ENCODE measurements at regions of chr11 and their contacts with region 1.

Region 1: DNA sequence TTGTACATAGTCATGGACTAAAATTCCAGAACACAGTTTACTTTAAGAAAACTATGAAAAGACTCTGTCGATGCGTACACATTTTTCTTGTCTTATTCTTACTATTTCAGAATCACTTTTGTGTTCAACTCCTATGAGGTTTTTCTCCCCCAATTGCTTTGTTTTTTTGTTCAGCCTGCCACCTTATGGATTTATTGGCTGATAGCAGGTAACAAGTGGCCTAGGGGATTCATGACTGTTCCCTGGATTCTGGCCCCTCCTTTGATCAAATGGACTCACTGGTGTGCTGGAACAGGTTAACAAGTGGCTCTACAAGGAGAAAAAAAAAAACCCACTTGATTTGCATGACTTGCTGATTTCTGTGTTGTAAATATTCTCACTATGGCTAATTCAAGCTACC is 10.6 kb downstream of the MMP20 start:
- DNase-seq: no peak
- ATAC-seq: 0 out of 3 replicates have a peak, but pooled peaks have one; percentile 3
- H3K4me3 ChIP-seq: no peak overlapping the region
- H3K27ac ChIP-seq: no peak overlapping the region
- H3K4me1 ChIP-seq: peaks cover 18% of the 10 kb centered on the region
- H3K27me3 ChIP-seq: no peaks in the 10 kb centered on the region
- CTCF ChIP-seq: peak; percentile 18 to 55 (median 40); a peak in 5 of 6 replicates
- EP300 ChIP-seq: no peak
- POLR2A ChIP-seq: no peak
- RAD21 ChIP-seq: peak; percentile 80

Region 2: DNA sequence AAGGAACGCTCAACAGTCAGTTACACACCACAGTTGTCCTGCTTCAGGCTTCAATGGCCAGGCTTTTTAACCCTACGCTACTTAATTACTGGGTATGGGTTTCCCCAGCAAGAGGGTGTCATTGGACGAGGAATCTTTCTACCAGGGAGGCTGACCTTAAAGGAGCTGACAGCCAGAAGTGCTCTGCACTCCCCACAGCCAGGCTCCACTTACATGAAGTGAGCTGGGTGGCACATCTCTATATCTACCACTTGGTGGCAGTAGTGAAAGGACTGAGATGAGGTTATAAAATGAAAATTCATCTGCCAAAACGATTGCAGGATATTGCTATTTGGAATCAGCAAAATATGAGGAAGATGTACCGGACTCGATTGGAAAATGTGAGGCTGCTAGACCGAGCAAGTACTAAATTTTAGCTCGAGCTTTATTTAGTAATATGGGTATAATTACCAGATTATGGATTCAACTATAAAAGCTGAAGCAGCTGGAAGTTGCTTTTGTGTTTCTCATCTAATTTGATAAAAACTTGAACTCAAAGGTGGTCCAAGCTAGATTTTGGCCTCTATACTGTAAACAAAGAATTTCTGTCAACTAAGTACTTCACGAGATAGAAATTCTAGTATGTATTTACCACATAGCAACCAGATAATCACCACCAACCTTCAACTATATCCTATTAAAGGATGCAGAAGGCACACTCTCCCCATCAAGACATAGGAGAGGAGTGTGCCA is 753.6 kb before region 1 on chr11:
- CTCF ChIA-PET with region 1: interaction called, 9 read pairs
- POLR2A ChIA-PET with region 1: no interaction called
- RAD21 ChIA-PET with region 1: interaction called, 4 read pairs
- SMC1A ChIA-PET with region 1: interaction called, 10 read pairs
- in situ Hi-C with region 1: no loop called
- intact Hi-C with region 1: no loop called
- DNase-seq: no peak
- ATAC-seq: peak; percentile 91
- H3K4me3 ChIP-seq: no peak overlapping the region
- H3K27ac ChIP-seq: no peak overlapping the region
- H3K4me1 ChIP-seq: no peaks in the 10 kb centered on the region
- H3K27me3 ChIP-seq: no peaks in the 10 kb centered on the region; a peak in 1 of 4 replicates
- CTCF ChIP-seq: peak; percentile 61 to 72 (median 65)
- EP300 ChIP-seq: no peak
- POLR2A ChIP-seq: no peak
- RAD21 ChIP-seq: peak; percentile 57

Region 3: GRCh38 chr11:102332611-102332994 is 281.9 kb before region 1 on chr11:
- CTCF ChIA-PET with region 1: interaction called, 35 read pairs
- POLR2A ChIA-PET with region 1: no interaction called
- RAD21 ChIA-PET with region 1: interaction called, 4 read pairs
- SMC1A ChIA-PET with region 1: interaction called, 6 read pairs
- in situ Hi-C with region 1: no loop called
- intact Hi-C with region 1: no loop called
- DNase-seq: no peak
- ATAC-seq: peak; percentile 32
- H3K4me3 ChIP-seq: no peak overlapping the region
- H3K27ac ChIP-seq: no peak overlapping the region
- H3K4me1 ChIP-seq: no peaks in the 10 kb centered on the region; the same call in 1 of the 2 replicates
- H3K27me3 ChIP-seq: no peaks in the 10 kb centered on the region
- CTCF ChIP-seq: no peak
- EP300 ChIP-seq: no peak
- POLR2A ChIP-seq: 0 out of 2 replicates have a peak, but pooled peaks have one; percentile 2
- RAD21 ChIP-seq: no peak

Region 4: DNA sequence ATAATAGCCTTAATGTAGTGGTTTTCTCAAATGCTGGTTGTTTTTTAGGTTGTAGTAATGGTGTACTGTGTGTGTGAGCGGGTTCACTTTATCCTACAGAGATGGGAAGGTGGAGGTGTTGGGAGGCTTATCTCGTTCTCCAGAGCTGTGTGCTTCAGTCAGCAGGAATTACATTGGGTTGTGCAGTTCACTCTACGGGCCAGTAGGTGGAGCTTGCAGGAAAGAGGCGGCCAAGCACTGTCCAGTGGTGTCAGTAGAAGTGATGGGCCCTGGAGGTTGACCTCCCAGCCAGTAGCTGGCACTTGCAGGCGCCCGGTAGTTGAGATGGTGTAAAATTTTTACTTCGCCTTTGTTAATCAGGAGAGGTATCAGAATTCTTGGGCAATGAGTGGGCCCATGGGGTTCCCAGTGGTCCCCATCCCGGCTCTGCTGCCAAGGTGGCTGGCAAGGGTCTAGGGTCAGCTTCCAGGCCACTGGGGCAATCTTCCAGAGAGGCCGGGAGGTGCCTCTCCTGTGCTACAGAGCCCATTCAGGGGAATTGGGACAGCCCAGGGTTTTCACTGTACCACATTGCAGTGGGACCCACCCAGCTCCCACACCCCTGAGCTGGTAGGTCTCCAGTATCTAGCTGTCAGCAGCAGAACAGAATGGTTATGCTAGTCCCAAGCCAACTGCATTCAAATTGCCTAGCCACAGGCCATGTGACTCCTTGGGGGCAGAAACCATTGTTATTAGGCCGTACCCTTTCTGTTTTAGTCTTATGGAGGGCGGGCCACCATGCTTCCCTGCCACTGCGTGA is 223.6 kb before region 1 on chr11:
- CTCF ChIA-PET with region 1: interaction called, 172 read pairs
- POLR2A ChIA-PET with region 1: interaction called, 4 read pairs
- RAD21 ChIA-PET with region 1: interaction called, 112 read pairs
- SMC1A ChIA-PET with region 1: interaction called, 168 read pairs
- in situ Hi-C with region 1: no loop called
- intact Hi-C with region 1: loop called (anchors 1 kb)
- DNase-seq: no peak
- ATAC-seq: peak; percentile 93
- H3K4me3 ChIP-seq: no peak overlapping the region
- H3K27ac ChIP-seq: no peak overlapping the region
- H3K4me1 ChIP-seq: no peaks in the 10 kb centered on the region; the same call in 1 of the 2 replicates
- H3K27me3 ChIP-seq: no peaks in the 10 kb centered on the region
- CTCF ChIP-seq: peak; percentile 82 to 91 (median 89)
- EP300 ChIP-seq: no peak
- POLR2A ChIP-seq: no peak
- RAD21 ChIP-seq: peak; percentile 76

Region 5: GRCh38 chr11:102488208-102488607 is 126.3 kb before region 1 on chr11:
- CTCF ChIA-PET with region 1: interaction called, 42 read pairs
- POLR2A ChIA-PET with region 1: no interaction called
- RAD21 ChIA-PET with region 1: interaction called, 25 read pairs
- SMC1A ChIA-PET with region 1: interaction called, 43 read pairs
- in situ Hi-C with region 1: no loop called
- intact Hi-C with region 1: no loop called
- DNase-seq: no peak
- ATAC-seq: peak; percentile 86
- H3K4me3 ChIP-seq: no peak overlapping the region
- H3K27ac ChIP-seq: no peak overlapping the region
- H3K4me1 ChIP-seq: peaks cover 18% of the 10 kb centered on the region
- H3K27me3 ChIP-seq: 0 out of 4 replicates have a peak, but pooled peaks cover 0 to 3% of the 10 kb centered on the region in 2 experiments
- CTCF ChIP-seq: no peak
- EP300 ChIP-seq: no peak
- POLR2A ChIP-seq: no peak
- RAD21 ChIP-seq: no peak

Region 6: DNA sequence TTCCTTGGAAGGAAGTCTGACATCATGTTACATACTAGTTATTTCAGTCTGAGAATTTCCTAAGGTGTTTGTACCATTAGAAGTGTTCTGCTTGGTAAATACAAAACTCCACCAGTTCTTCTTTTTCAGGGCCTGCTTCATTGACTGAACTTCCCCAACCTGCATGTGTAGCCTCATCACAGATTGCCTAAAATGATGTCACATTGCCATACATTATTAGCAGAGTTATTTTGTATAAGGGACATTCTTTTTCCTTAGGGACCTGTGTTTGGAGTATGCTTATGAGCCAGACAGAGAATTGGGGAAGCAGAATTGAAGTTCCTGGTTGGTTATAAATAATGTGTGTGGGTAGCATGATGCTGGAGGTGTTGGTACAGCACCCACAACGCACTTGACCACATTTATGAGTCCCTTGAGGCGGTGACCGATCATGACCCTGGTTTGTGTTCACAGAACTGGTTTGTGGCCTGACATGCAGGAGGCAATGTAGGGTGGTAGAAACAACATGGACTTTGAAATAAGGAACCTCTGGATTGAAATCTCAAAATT is 67.5 kb before region 1 on chr11:
- CTCF ChIA-PET with region 1: interaction called, 110 read pairs
- POLR2A ChIA-PET with region 1: interaction called, 67 read pairs
- RAD21 ChIA-PET with region 1: interaction called, 143 read pairs
- SMC1A ChIA-PET with region 1: interaction called, 399 read pairs
- in situ Hi-C with region 1: no loop called
- intact Hi-C with region 1: loop called (anchors 1 kb)
- DNase-seq: peak; percentile 93
- ATAC-seq: peak; percentile 81
- H3K4me3 ChIP-seq: no peak overlapping the region
- H3K27ac ChIP-seq: peak overlapping the region; percentile 68; the same call in 1 of the 2 replicates
- H3K4me1 ChIP-seq: peaks cover 37% of the 10 kb centered on the region
- H3K27me3 ChIP-seq: no peaks in the 10 kb centered on the region
- CTCF ChIP-seq: peak in 1 of 3 experiments; percentile 3; a peak in 1 of 6 replicates
- EP300 ChIP-seq: peak; percentile 93 to 95; a peak in 3 of 4 replicates
- POLR2A ChIP-seq: no peak
- RAD21 ChIP-seq: peak; percentile 32; the same call in 1 of the 2 replicates

Region 7: DNA sequence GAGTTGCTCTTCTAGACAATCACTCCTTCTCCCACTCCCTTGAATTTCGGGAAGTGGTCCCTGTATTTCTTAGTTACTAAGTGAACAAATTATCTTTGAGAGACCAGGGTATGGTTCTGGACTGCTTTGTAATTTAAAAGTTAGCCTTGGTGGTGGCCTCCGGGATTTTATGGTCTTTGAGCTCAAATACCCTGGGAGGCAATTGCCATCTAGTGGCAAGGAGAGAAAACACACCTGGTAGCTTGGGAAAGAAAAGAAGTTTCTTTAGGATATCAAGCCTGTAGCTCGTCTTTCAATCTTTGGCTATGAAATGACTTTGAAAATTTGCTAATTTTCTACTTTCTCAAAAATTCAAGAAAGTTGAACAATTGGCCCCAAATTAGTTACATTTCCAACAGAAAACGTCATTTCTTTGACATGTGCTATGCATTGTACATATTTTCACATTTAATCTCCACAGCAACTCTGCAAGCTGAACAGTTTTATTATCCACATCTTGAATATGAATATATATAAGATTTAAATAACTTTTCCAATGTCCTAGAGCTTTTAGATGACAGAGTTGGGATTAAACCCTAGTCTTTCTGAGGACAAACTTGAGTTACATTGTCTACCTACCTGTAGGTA is 52.0 kb after region 1 on chr11:
- CTCF ChIA-PET with region 1: interaction called, 196 read pairs
- POLR2A ChIA-PET with region 1: interaction called, 4 read pairs
- RAD21 ChIA-PET with region 1: interaction called, 106 read pairs
- SMC1A ChIA-PET with region 1: interaction called, 98 read pairs
- in situ Hi-C with region 1: no loop called
- intact Hi-C with region 1: loop called (anchors 5 kb)
- DNase-seq: no peak
- ATAC-seq: peak; percentile 76
- H3K4me3 ChIP-seq: no peak overlapping the region
- H3K27ac ChIP-seq: no peak overlapping the region
- H3K4me1 ChIP-seq: no peaks in the 10 kb centered on the region
- H3K27me3 ChIP-seq: peaks cover 0 to 3% of the 10 kb centered on the region in 2 experiments; a peak in 1 of 4 replicates
- CTCF ChIP-seq: peak; percentile 81 to 87 (median 82)
- EP300 ChIP-seq: no peak
- POLR2A ChIP-seq: no peak
- RAD21 ChIP-seq: peak; percentile 97

Measured in GM12878 (cell line).